Activated naive CD4-positive, alpha-beta T cell treated with anti-CD3 and anti-CD28 coated beads, Interleukin-2, amount 10 ng/mL, durations not matched to agents 7 days and 5 days (primary cell): ENCODE measurements at regions of chr17 and their contacts with region 1.

Region 1: GRCh38 chr17:7561028-7561575 is 617 bp upstream of the SENP3 start:
- DNase-seq: peak; percentile 88
- H3K4me3 Mint-ChIP-seq: peak overlapping the region; percentile 86
- H3K27ac Mint-ChIP-seq: peak overlapping the region; percentile 92
- H3K4me1 Mint-ChIP-seq: peaks cover 67% of the 10 kb centered on the region
- H3K27me3 Mint-ChIP-seq: no peaks in the 10 kb centered on the region

Region 2: GRCh38 chr17:7045909-7046724 is 515.0 kb before region 1 on chr17:
- CTCF ChIA-PET with region 1: no interaction called
- DNase-seq: peak; percentile 64
- H3K4me3 Mint-ChIP-seq: peak overlapping the region; percentile 65
- H3K27ac Mint-ChIP-seq: peak overlapping the region; percentile 71
- H3K4me1 Mint-ChIP-seq: peaks cover 42% of the 10 kb centered on the region
- H3K27me3 Mint-ChIP-seq: peaks cover 60% of the 10 kb centered on the region

Region 3: DNA sequence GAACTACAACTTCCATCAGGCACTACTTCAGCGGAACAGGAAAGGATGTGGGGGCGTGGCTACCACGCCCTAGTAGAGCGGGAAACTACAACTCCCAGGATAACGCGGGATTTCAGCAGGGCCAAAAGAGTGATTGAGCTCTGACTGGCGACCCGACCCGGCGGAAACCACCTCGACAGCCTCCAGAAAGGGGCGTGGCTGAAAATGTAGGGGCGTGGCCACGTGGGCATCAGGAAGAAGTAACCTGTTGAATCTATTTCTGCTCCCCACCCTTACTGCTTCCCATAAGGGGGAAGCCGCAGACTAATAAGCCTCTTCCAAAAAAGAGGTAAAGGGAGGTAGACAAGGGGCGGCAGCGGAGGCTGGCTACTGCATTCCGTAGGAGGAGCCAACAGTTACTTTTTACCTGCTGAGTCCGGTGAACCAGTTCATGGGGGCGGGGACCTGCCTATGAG is 125.9 kb before region 1 on chr17 and contains the start of gene TMEM102:
- CTCF ChIA-PET with region 1: interaction called, 16 read pairs
- DNase-seq: peak; percentile 99
- H3K4me3 Mint-ChIP-seq: peak within 1 kb of the TSS; percentile 94
- H3K27ac Mint-ChIP-seq: peak within 1 kb of the TSS; percentile 97
- H3K4me1 Mint-ChIP-seq: peaks cover 44% of the 10 kb centered on the region
- H3K27me3 Mint-ChIP-seq: peaks cover 27% of the 10 kb centered on the region

Region 4: DNA sequence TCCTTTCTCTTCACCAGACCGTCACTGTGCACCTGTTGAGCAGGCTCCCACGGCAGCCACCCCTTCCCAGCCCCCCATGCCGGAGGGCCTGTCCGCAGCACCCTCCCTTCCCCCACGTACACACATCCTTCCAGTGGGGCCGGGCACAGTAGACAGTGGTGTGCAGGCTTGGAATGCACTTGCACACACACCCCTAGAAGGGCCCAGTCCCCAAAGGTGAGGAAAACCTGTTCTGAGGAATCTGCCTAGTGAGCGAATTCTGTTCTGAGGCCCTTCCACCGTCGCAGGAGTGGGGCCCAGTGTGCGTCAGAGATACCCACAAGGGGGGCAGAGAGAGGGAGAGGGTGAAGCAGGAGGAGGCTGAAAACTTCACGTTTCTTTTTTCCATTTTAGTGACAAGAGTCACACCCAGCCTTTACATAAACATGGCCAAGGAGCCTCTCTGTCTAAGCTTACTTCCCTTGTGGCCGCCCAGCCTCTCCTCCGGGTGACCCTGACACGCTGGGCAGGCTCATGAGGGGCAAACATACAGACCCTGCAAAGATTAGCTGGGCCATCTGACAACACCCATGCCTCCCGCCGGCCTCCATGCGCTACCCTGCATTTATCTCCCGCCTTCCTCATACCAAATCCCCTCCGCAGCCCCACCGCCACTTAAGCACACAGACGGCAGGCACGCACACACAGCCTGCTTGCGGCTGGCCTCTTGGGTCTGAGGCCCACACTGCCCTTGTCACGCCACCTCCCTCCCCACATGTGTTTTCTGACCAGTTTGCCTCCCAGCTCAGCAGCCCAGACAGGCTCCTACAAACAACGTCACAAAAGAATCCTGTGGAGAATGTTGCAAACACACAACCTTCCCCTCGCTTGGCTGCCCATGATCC is 83.5 kb before region 1 on chr17:
- CTCF ChIA-PET with region 1: interaction called, 10 read pairs
- DNase-seq: no peak
- H3K4me3 Mint-ChIP-seq: peak overlapping the region; percentile 79
- H3K27ac Mint-ChIP-seq: peak overlapping the region; percentile 78
- H3K4me1 Mint-ChIP-seq: peaks cover 61% of the 10 kb centered on the region
- H3K27me3 Mint-ChIP-seq: no peaks in the 10 kb centered on the region

Region 5: DNA sequence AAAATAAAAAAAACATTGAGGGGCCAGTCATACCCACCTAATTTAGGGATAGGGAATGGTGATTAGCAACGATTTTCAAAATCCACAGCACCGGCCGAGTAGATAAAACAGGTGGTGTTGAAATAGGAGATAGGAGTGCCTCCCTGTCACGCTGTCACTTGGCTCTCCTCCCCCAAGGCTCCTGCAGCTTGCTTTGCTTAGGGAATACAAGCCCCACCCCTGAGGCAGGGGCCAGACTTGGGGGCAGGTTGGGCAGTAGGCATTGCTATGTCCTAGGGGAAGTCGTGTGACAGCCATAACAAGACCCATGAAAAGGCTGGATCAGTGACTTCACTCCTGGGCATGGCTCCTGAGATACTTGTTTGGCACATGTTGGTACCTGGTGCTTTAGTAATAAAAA is 51.2 kb before region 1 on chr17:
- CTCF ChIA-PET with region 1: interaction called, 157 read pairs
- DNase-seq: no peak
- H3K4me3 Mint-ChIP-seq: no peak overlapping the region
- H3K27ac Mint-ChIP-seq: no peak overlapping the region
- H3K4me1 Mint-ChIP-seq: peaks cover 2% of the 10 kb centered on the region
- H3K27me3 Mint-ChIP-seq: no peaks in the 10 kb centered on the region

Region 6: DNA sequence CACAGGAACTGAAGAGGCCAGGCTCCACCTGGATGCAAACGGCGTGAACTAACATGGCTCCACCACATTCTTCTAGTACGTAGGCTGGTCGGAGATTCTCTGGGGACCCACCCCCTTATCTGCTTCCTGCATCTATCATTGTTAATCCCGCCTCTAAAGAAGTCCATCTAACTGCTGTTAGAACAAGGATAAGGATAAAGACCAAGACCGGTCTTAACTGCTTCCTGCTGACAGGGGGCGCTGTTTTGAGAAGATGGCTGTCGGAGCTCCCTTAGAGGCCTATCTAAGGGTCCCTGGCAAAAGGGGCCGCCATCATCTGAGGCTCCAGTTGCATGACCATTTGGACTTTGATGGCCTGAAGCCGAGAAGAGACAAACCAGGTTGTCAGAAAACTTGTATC is 38.1 kb before region 1 on chr17:
- CTCF ChIA-PET with region 1: interaction called, 21 read pairs
- DNase-seq: peak; percentile 58
- H3K4me3 Mint-ChIP-seq: no peak overlapping the region
- H3K27ac Mint-ChIP-seq: no peak overlapping the region
- H3K4me1 Mint-ChIP-seq: peaks cover 4% of the 10 kb centered on the region
- H3K27me3 Mint-ChIP-seq: peaks cover 6% of the 10 kb centered on the region

Region 7: GRCh38 chr17:7583253-7584109 is 22.4 kb after region 1 on chr17 and contains the start of gene MPDU1:
- CTCF ChIA-PET with region 1: interaction called, 10 read pairs
- DNase-seq: peak; percentile 96
- H3K4me3 Mint-ChIP-seq: peak within 1 kb of the TSS; percentile 94
- H3K27ac Mint-ChIP-seq: peak within 1 kb of the TSS; percentile 99
- H3K4me1 Mint-ChIP-seq: peaks cover 71% of the 10 kb centered on the region
- H3K27me3 Mint-ChIP-seq: no peaks in the 10 kb centered on the region

Region 8: GRCh38 chr17:7687908-7688807 is 127.1 kb after region 1 on chr17 and contains the start of gene WRAP53:
- CTCF ChIA-PET with region 1: interaction called, 10 read pairs
- DNase-seq: peak; percentile 97
- H3K4me3 Mint-ChIP-seq: peak within 1 kb of the TSS; percentile 93
- H3K27ac Mint-ChIP-seq: peak within 1 kb of the TSS; percentile 98
- H3K4me1 Mint-ChIP-seq: peaks cover 42% of the 10 kb centered on the region
- H3K27me3 Mint-ChIP-seq: peaks cover 5% of the 10 kb centered on the region